ENCODE measurements at regions of chr3 and their contacts with region 1.

Region 1: DNA sequence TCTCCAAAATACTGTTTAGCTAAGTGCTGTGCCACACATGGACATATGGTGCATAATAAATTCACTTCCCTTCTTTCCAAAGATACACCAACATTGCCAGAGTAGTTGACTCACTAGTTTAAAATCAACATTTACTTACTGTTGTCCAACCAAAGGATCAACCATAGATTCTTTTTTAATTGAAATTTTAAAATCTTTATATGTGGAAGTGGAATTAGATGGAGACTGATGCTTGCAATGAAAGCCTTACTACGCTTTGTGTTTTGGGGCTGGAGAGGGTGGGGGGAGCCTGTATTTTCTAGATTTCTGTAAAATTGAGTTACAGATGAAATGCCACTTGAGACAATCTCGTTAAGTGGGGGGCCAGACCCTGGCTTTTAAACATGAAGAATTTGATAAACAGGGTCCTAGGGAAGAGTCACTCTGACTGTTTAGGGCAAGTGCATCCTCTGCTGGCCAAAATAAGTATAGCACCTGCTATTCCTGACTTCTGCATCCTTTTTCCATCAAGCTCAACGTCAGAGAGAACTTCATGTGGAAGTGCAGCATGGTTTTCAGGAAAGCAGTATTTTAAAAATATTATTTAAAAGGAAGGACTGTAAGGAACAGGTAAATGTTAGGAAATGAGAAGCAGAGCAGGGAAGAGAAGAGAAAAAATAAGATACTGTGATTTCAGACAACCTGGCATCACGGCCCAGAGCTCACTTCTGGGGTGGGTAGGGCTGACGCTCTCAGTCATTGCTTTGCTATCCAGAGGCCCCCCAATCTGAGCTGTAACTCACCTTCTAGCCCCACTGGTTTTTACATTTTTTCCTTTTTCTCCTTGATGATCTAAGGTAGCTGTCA is 76.7 kb downstream of the BOC start:
- DNase-seq: peak; percentile 55
- H3K4me3 Mint-ChIP-seq: no peak overlapping the region
- H3K27ac Mint-ChIP-seq: no peak overlapping the region
- H3K4me1 Mint-ChIP-seq: peaks cover 3% of the 10 kb centered on the region
- H3K27me3 Mint-ChIP-seq: no peaks in the 10 kb centered on the region

Region 2: DNA sequence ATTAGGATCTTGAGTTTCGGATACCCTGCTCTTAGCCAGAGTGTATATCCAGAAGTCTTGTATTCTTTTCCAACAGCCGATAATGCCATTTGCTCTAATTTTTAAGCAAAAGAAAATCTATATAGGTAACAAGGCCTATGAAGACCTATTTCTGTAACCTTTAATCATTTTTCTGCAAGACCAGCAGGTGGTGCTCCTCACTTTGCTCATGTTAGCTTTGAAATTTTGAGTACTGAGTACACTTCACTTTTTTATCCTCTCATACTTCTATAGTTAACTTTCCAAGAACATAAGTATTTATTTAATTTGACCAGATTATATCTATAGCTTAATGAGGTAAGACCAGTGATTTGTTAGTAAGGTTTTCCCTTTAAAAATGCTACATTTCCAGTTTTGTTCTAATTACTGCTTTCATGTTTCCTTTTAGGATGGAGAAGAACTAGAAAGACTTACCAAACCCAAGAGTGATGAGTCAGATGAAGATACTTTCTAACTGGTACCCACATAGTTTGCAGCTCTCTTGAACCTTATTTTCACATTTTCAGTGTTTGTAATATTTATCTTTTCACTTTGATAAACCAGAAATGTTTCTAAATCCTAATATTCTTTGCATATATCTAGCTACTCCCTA is 705.7 kb before region 1 on chr3:
- CTCF ChIA-PET with region 1: interaction called, 3 read pairs
- POLR2A ChIA-PET with region 1: no interaction called
- intact Hi-C with region 1: loop called (anchors 2 kb)
- DNase-seq: peak; percentile 56
- H3K4me3 Mint-ChIP-seq: no peak overlapping the region
- H3K27ac Mint-ChIP-seq: no peak overlapping the region
- H3K4me1 Mint-ChIP-seq: peaks cover 5% of the 10 kb centered on the region
- H3K27me3 Mint-ChIP-seq: no peaks in the 10 kb centered on the region

Region 3: GRCh38 chr3:113035387-113035982 is 252.5 kb before region 1 on chr3:
- CTCF ChIA-PET with region 1: interaction called, 26 read pairs
- POLR2A ChIA-PET with region 1: no interaction called
- intact Hi-C with region 1: no loop called
- DNase-seq: peak; percentile 17
- H3K4me3 Mint-ChIP-seq: no peak overlapping the region
- H3K27ac Mint-ChIP-seq: no peak overlapping the region
- H3K4me1 Mint-ChIP-seq: no peaks in the 10 kb centered on the region
- H3K27me3 Mint-ChIP-seq: no peaks in the 10 kb centered on the region

Region 4: DNA sequence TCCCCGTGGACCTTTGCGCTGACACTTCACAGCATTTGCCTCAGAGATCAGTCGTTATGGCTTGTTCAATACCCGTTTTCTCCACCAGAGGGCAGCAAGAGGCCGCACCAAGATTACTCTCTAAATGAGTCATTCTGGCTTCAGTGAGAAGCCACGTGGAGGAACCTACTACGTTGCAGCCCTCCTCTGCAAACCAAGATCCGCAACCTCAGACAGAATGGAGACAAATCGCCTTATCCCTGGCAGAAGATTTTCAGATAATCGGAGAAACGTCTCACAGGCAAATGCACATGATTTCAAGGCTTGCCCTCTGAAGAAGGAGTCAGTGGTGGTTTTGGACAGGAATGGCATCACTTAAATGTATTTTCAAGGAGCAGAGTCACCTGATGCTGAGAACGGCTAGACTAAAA is 236.7 kb before region 1 on chr3:
- CTCF ChIA-PET with region 1: interaction called, 42 read pairs
- POLR2A ChIA-PET with region 1: no interaction called
- intact Hi-C with region 1: loop called (anchors 1 kb)
- DNase-seq: peak; percentile 92
- H3K4me3 Mint-ChIP-seq: no peak overlapping the region
- H3K27ac Mint-ChIP-seq: no peak overlapping the region
- H3K4me1 Mint-ChIP-seq: peaks cover 5% of the 10 kb centered on the region
- H3K27me3 Mint-ChIP-seq: no peaks in the 10 kb centered on the region

Region 5: DNA sequence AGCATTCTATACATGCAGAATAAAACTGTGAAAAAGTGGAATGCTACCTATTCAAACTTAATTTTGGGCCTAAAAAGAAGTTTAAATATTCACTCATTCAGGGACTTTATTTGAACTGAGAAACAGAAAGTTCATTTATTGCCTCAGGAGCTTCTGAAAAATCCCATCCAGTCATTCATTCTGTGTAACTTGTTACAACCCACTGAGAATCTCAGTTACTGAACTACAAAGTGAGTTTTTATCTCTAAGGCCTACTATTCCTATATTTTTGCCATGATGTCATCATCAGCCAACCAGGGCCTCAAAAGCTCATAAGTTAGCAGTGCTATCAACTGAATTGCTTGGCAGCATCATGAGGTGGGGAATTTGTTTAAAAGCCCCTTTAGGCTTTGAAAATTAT is 174.7 kb before region 1 on chr3:
- CTCF ChIA-PET with region 1: interaction called, 11 read pairs
- POLR2A ChIA-PET with region 1: no interaction called
- intact Hi-C with region 1: no loop called
- DNase-seq: no peak
- H3K4me3 Mint-ChIP-seq: no peak overlapping the region
- H3K27ac Mint-ChIP-seq: no peak overlapping the region
- H3K4me1 Mint-ChIP-seq: peaks cover 35% of the 10 kb centered on the region
- H3K27me3 Mint-ChIP-seq: no peaks in the 10 kb centered on the region

Region 6: DNA sequence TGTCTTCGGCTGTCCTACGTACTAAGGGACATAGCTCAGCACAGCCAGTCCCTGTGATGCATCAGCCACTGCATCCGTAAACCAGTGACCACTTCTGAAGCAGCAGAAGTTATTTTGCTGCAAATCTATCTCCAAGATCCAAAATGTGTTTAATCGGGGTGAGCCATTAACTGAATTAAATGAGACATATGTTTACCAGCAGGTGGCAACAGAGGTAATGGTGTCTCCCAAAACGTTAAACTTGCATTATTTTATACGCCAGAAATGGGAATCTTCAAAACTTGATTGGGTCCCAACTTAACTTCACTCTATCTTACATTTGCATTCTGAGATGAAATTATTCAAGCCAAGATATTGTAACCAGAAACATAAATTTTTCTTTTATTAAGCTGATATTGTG is 152.0 kb before region 1 on chr3:
- CTCF ChIA-PET with region 1: interaction called, 34 read pairs
- POLR2A ChIA-PET with region 1: no interaction called
- intact Hi-C with region 1: loop called (anchors 1 kb)
- DNase-seq: no peak
- H3K4me3 Mint-ChIP-seq: no peak overlapping the region
- H3K27ac Mint-ChIP-seq: no peak overlapping the region
- H3K4me1 Mint-ChIP-seq: peaks cover 3% of the 10 kb centered on the region
- H3K27me3 Mint-ChIP-seq: no peaks in the 10 kb centered on the region

Measured in activated CD4-positive, alpha-beta memory T cell treated with anti-CD3 and anti-CD28 coated beads for 36 hours (primary cell).